WTC11 (cell line): ENCODE measurements at regions of chr5 and their contacts with region 1.

Region 1: GRCh38 chr5:141564216-141564692 is 54.5 kb downstream of the DIAPH1 start:
- DNase-seq: peak; percentile 48
- ATAC-seq: peak; percentile 56
- H3K4me3 Mint-ChIP-seq: no peak overlapping the region
- H3K27ac Mint-ChIP-seq: peak overlapping the region; percentile 94
- H3K4me1 Mint-ChIP-seq: peaks cover 35% of the 10 kb centered on the region
- H3K27me3 Mint-ChIP-seq: no peaks in the 10 kb centered on the region
- CTCF ChIP-seq: peak; percentile 94

Region 2: DNA sequence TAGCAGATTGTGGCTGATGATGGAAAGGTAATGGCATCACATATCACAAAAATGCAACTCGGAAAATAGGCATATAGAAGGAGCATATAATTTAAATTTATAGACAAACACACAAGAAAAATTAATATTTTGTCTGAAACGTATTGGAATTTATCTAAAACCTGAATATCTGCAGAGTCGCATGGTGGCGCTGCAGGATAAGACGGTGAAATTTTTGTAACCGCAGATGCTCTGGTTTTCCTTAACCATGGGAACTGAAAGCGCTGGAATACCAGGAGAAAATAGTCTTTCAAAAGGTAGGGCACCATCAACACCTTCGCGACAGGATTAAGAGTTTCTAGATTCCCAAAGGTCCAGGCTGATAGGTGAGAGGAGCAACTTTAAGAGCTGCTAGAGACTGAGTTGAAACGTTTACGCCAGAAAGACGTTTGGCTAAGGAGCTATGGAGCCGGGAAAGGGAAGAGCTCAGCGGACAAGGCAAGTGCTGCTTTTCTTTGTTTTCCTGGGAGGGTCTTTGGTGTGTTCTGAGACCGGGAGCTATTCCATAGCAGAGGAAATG is 330.1 kb before region 1 on chr5:
- CTCF ChIA-PET with region 1: interaction called, 11 read pairs
- POLR2A ChIA-PET with region 1: no interaction called
- DNase-seq: peak; percentile 47
- ATAC-seq: peak; percentile 64
- H3K4me3 Mint-ChIP-seq: peak overlapping the region; percentile 69
- H3K27ac Mint-ChIP-seq: no peak overlapping the region
- H3K4me1 Mint-ChIP-seq: peaks cover 5% of the 10 kb centered on the region
- H3K27me3 Mint-ChIP-seq: peaks cover 3% of the 10 kb centered on the region; the same call in 1 of the 2 replicates
- CTCF ChIP-seq: peak; percentile 45

Region 3: GRCh38 chr5:141349917-141350619 is 214.2 kb before region 1 on chr5 and contains the start of gene PCDHGB1:
- CTCF ChIA-PET with region 1: interaction called, 16 read pairs
- POLR2A ChIA-PET with region 1: no interaction called
- DNase-seq: peak; percentile 86
- ATAC-seq: peak; percentile 96
- H3K4me3 Mint-ChIP-seq: peak within 1 kb of the TSS; percentile 72
- H3K27ac Mint-ChIP-seq: peak within 1 kb of the TSS; percentile 47; the same call in 1 of the 2 replicates
- H3K4me1 Mint-ChIP-seq: peaks cover 2% of the 10 kb centered on the region
- H3K27me3 Mint-ChIP-seq: peaks cover 3% of the 10 kb centered on the region
- CTCF ChIP-seq: peak; percentile 50
- total RNA-seq, gene PCDHGB1: 4.9 to 5.6 TPM (median 5.5 TPM) in 3 replicates

Region 4: DNA sequence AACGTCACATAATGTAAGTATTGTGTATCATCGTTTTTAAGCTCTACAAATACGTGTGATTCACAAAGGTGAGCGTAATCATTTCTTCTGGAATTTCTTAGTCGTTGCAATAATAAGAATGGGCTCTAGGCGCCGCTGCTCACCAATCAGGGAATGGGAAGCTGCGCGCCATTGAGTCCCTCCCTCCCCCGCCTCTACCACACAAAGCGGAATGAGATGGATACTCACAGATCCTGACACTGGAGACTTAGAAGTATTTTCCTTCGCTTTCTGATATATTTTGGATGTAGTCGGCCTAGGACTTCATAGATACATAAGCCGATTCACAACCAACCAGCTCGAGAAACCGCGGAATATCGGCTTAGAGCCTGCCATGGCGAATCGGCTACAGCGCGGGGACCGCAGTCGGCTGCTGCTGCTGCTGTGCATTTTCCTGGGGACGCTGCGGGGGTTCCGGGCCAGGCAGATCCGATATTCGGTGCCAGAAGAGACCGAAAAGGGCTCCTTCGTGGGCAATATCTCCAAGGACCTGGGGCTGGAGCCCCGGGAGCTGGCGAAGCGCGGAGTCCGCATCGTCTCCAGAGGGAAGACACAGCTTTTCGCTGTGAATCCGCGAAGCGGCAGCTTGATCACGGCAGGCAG is 143.3 kb before region 1 on chr5 and contains the start of gene PCDHGA11:
- CTCF ChIA-PET with region 1: interaction called, 37 read pairs
- POLR2A ChIA-PET with region 1: interaction called, 4 read pairs
- DNase-seq: peak; percentile 77
- ATAC-seq: peak; percentile 52
- H3K4me3 Mint-ChIP-seq: peak within 1 kb of the TSS; percentile 81
- H3K27ac Mint-ChIP-seq: peak within 1 kb of the TSS; percentile 47
- H3K4me1 Mint-ChIP-seq: peaks cover 26% of the 10 kb centered on the region
- H3K27me3 Mint-ChIP-seq: peaks cover 14% of the 10 kb centered on the region
- CTCF ChIP-seq: peak; percentile 68
- total RNA-seq, gene PCDHGA11: 7.0 to 8.4 TPM (median 7.1 TPM) in 3 replicates

Region 5: DNA sequence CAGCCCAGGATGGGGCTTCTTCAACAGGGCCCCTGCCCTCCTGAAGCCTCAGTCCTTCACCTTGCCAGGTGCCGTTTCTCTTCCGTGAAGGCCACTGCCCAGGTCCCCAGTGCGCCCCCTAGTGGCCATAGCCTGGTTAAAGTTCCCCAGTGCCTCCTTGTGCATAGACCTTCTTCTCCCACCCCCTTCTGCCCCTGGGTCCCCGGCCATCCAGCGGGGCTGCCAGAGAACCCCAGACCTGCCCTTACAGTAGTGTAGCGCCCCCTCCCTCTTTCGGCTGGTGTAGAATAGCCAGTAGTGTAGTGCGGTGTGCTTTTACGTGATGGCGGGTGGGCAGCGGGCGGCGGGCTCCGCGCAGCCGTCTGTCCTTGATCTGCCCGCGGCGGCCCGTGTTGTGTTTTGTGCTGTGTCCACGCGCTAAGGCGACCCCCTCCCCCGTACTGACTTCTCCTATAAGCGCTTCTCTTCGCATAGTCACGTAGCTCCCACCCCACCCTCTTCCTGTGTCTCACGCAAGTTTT is 51.8 kb before region 1 on chr5:
- CTCF ChIA-PET with region 1: interaction called, 44 read pairs
- POLR2A ChIA-PET with region 1: no interaction called
- DNase-seq: peak; percentile 99
- ATAC-seq: peak; percentile 82
- H3K4me3 Mint-ChIP-seq: peak overlapping the region; percentile 87
- H3K27ac Mint-ChIP-seq: no peak overlapping the region
- H3K4me1 Mint-ChIP-seq: peaks cover 61% of the 10 kb centered on the region
- H3K27me3 Mint-ChIP-seq: no peaks in the 10 kb centered on the region
- CTCF ChIP-seq: peak; percentile 99

Region 6: DNA sequence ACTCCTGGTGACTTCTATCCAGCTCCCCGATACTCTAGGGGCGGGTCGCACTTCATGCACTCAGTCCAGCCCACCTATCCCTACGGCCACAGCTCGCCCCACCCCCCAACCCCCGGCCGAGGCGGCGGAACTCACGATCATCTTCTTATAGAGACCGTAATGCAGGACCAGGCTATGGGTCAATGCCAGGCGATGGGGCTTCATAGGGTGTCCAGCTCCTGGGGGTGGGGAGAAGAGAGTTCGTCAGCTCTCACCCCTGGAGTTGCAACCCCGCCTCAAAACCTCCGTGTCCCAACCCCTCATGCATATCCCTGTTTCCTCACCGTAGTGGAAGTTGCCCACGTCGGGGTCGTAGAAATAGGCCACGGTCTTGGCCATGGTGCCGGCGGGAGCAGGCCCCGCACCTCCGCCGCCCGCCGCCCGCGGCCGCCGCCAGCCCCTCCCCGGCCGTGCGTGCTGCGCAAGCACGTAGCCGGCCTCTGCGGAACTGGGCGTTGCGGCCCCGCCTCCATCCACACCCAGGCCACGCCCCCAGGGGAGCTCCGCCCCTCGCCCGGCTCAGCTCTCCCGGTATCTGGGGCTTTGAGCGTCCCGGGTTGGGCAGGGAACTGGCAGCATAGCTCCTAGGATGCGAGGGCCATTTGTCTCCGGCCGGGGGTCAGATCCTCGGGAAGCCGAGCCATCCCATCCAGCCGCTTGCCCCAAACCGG is 72.3 kb after region 1 on chr5 and contains the starts of genes HDAC3 and RELL2:
- CTCF ChIA-PET with region 1: interaction called, 20 read pairs
- POLR2A ChIA-PET with region 1: interaction called, 3 read pairs
- DNase-seq: peak; percentile 97
- ATAC-seq: peak; percentile 82
- H3K4me3 Mint-ChIP-seq: peak within 1 kb of the TSS; percentile 90
- H3K27ac Mint-ChIP-seq: peak within 1 kb of the TSS; percentile 90
- H3K4me1 Mint-ChIP-seq: peaks cover 22% of the 10 kb centered on the region
- H3K27me3 Mint-ChIP-seq: no peaks in the 10 kb centered on the region
- CTCF ChIP-seq: no peak
- total RNA-seq, gene HDAC3: 84.7 to 96.2 TPM (median 94.5 TPM) in 3 replicates
- total RNA-seq, gene RELL2: 19.3 to 23.8 TPM (median 21.4 TPM) in 3 replicates

Region 7: GRCh38 chr5:141664732-141665461 is 100.6 kb after region 1 on chr5:
- CTCF ChIA-PET with region 1: no interaction called
- POLR2A ChIA-PET with region 1: no interaction called
- DNase-seq: peak; percentile 88
- ATAC-seq: peak; percentile 95
- H3K4me3 Mint-ChIP-seq: no peak overlapping the region
- H3K27ac Mint-ChIP-seq: no peak overlapping the region
- H3K4me1 Mint-ChIP-seq: peaks cover 11% of the 10 kb centered on the region
- H3K27me3 Mint-ChIP-seq: no peaks in the 10 kb centered on the region
- CTCF ChIP-seq: peak; percentile 92